IMR-90 (cell line): ENCODE measurements at regions of chr1 and their contacts with region 1.

Region 1: GRCh38 chr1:153771841-153772593 is 3.2 kb upstream of the SLC27A3 start:
- DNase-seq: no peak
- ATAC-seq: no peak
- H3K4me3 ChIP-seq: no peak overlapping the region
- H3K27ac ChIP-seq: no peak overlapping the region
- H3K4me1 ChIP-seq: peaks cover 4% of the 10 kb centered on the region; the same call in 1 of the 2 replicates
- H3K27me3 ChIP-seq: no peaks in the 10 kb centered on the region
- CTCF ChIP-seq: peak; percentile 44
- POLR2A ChIP-seq: no peak
- RAD21 ChIP-seq: peak; percentile 62

Region 2: DNA sequence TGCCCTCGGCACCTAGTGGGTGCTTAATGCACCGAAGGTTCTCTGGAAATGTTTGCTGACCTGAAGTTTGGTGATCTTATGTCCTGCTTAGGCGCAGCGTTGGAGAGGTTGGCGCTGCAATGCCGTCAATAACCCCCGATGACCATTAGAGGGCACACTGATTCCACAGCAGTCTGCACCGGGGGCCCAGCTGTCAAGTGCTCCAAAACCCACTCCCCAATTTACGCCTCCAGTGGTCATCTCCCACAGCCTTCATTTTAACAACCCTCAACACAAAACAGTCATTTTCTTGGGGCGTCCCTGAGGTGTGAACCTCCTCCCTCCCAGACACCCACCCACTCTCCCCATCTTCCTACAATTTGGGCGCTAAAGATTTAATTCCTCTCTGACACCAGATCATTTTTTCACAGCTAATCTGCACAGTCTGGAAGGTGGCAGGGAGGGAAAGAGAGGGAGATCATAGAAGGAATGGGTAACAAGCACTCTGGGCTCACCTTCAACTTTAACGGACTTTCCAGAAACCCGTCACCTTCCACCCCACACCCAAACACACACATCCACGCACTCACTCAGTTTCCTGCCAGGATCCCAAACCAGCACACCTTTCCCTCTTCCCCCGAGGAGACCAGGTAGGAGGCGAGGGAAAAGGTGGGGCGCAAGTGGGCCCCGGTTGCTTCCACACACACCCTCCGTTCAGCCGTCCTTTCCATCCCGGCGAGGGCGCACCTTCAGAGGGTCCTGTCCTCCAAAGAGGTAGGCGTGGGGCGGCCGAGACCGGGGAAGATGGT is 94.1 kb before region 1 on chr1:
- CTCF ChIA-PET with region 1: no interaction called
- POLR2A ChIA-PET with region 1: no interaction called
- dilution Hi-C with region 1: no loop called
- in situ Hi-C with region 1: no loop called
- intact Hi-C with region 1: loop called (anchors 2 kb)
- DNase-seq: peak; percentile 45
- ATAC-seq: peak; percentile 79
- H3K4me3 ChIP-seq: 0 out of 2 replicates have a peak overlapping the region, but pooled peaks have one; percentile 38
- H3K27ac ChIP-seq: no peak overlapping the region
- H3K4me1 ChIP-seq: peaks cover 7% of the 10 kb centered on the region; the same call in 1 of the 2 replicates
- H3K27me3 ChIP-seq: peaks cover 47% of the 10 kb centered on the region
- CTCF ChIP-seq: peak; percentile 87
- POLR2A ChIP-seq: no peak
- RAD21 ChIP-seq: peak; percentile 85